ENCODE measurements at regions of chr1 and their contacts with region 1.

Region 1: GRCh38 chr1:108016451-108016920 is 51.5 kb upstream of the VAV3 start:
- DNase-seq: peak; percentile 25
- H3K4me3 Mint-ChIP-seq: no peak overlapping the region
- H3K27ac Mint-ChIP-seq: no peak overlapping the region
- H3K4me1 Mint-ChIP-seq: no peaks in the 10 kb centered on the region
- H3K27me3 Mint-ChIP-seq: no peaks in the 10 kb centered on the region

Region 2: GRCh38 chr1:108049178-108049819 is 32.8 kb after region 1 on chr1:
- CTCF ChIA-PET with region 1: no interaction called
- POLR2A ChIA-PET with region 1: no interaction called
- intact Hi-C with region 1: loop called (anchors 2 kb)
- DNase-seq: peak; percentile 43
- H3K4me3 Mint-ChIP-seq: no peak overlapping the region
- H3K27ac Mint-ChIP-seq: no peak overlapping the region
- H3K4me1 Mint-ChIP-seq: peaks cover 24% of the 10 kb centered on the region
- H3K27me3 Mint-ChIP-seq: peaks cover 6% of the 10 kb centered on the region

Measured in activated CD4-positive, alpha-beta memory T cell treated with anti-CD3 and anti-CD28 coated beads for 36 hours (primary cell).